ENCODE measurements at regions of chr19 and their contacts with region 1.

Region 1: DNA sequence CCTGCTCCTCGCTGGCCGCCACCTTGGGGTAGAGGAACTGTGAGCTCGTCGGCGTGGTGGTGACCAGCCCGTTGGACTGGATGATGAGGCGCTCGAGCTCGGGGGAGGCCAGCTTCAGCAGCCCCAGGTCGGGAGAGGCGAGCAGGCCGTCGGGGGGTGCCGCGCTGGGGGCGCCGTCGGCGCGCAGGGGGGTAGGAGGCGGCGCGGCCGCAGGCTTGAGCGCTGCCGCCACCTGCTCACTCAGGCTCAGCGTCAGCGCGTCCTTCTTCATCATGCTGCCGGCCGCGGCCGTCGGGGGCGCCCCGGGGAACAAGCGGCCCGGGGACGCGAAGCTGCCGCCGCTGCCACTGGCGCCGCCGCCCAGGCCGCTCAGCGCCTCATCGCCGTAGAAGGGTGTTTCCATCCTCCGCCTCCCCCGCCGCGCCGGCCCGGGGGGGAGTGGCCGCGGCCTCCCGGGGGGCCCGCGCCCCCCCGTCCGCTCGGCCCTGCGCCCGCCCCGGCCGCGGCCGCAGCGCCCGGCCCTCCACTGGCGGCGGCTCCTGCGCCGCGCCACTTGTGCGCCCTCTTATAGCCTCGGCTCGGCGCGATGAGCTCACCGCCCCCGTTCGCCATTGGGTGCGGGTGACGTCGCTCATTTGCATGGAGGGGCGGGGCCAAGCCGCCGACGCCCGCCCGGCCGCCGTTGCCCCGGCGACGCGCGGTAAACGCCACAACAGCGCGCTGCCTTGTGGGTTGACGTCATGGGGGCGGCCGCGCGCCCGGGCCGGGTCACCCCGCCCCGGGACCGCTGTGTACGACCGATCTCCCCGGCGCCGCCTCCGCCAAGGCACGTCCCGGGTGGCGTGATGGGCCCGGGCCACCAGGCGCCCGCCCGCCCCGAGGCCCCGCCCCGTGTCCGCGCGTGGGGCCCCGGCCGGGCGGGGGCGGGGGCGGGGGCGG is at the start of gene JUND:
- DNase-seq: peak; percentile 98
- ATAC-seq: peak; percentile 69
- H3K4me3 Mint-ChIP-seq: peak within 1 kb of the TSS; percentile 92
- H3K27ac Mint-ChIP-seq: peak within 1 kb of the TSS; percentile 100
- H3K4me1 Mint-ChIP-seq: peaks cover 37% of the 10 kb centered on the region
- H3K27me3 Mint-ChIP-seq: no peaks in the 10 kb centered on the region
- CTCF ChIP-seq: no peak
- total RNA-seq, gene JUND: 527 to 530 TPM

Region 2: GRCh38 chr19:18173572-18174288 is 107.6 kb before region 1 on chr19 and contains the start of gene IFI30:
- CTCF ChIA-PET with region 1: no interaction called
- POLR2A ChIA-PET with region 1: no interaction called
- intact Hi-C with region 1: no loop called
- DNase-seq: peak; percentile 72
- ATAC-seq: peak; percentile 86
- H3K4me3 Mint-ChIP-seq: peak within 1 kb of the TSS; percentile 80
- H3K27ac Mint-ChIP-seq: peak within 1 kb of the TSS; percentile 57
- H3K4me1 Mint-ChIP-seq: peaks cover 7% of the 10 kb centered on the region
- H3K27me3 Mint-ChIP-seq: no peaks in the 10 kb centered on the region
- CTCF ChIP-seq: no peak
- total RNA-seq, gene IFI30: 21.9 to 22.9 TPM

Region 3: DNA sequence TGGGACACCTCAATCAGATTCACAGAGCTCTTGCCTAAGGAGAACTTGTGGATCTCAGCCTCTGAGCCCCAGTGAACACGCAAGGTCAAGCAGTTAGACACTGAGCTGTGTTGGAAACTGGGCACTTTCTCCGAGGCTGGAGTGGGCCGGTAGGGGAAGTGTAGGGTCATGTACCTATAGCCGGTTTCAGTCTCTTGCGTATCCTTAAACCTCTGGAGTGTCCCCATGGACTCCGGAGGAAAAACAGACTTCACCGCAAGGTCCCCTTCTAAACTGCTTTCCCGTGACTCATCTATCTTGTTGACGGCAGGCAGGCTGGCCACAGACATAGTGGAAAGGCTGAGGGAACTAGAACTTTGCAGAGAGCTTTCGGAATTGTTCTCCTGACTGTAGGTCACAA is 18.4 kb before region 1 on chr19:
- CTCF ChIA-PET with region 1: interaction called, 12 read pairs
- POLR2A ChIA-PET with region 1: interaction called, 4 read pairs
- intact Hi-C with region 1: no loop called
- DNase-seq: no peak
- ATAC-seq: no peak
- H3K4me3 Mint-ChIP-seq: no peak overlapping the region
- H3K27ac Mint-ChIP-seq: no peak overlapping the region
- H3K4me1 Mint-ChIP-seq: no peaks in the 10 kb centered on the region
- H3K27me3 Mint-ChIP-seq: no peaks in the 10 kb centered on the region
- CTCF ChIP-seq: no peak

Region 4: GRCh38 chr19:18297308-18297707 is 16.0 kb after region 1 on chr19:
- CTCF ChIA-PET with region 1: interaction called, 166 read pairs
- POLR2A ChIA-PET with region 1: interaction called, 592 read pairs
- intact Hi-C with region 1: no loop called
- DNase-seq: no peak
- ATAC-seq: no peak
- H3K4me3 Mint-ChIP-seq: no peak overlapping the region
- H3K27ac Mint-ChIP-seq: peak overlapping the region; percentile 70
- H3K4me1 Mint-ChIP-seq: peaks cover 60% of the 10 kb centered on the region
- H3K27me3 Mint-ChIP-seq: no peaks in the 10 kb centered on the region
- CTCF ChIP-seq: no peak

Region 5: DNA sequence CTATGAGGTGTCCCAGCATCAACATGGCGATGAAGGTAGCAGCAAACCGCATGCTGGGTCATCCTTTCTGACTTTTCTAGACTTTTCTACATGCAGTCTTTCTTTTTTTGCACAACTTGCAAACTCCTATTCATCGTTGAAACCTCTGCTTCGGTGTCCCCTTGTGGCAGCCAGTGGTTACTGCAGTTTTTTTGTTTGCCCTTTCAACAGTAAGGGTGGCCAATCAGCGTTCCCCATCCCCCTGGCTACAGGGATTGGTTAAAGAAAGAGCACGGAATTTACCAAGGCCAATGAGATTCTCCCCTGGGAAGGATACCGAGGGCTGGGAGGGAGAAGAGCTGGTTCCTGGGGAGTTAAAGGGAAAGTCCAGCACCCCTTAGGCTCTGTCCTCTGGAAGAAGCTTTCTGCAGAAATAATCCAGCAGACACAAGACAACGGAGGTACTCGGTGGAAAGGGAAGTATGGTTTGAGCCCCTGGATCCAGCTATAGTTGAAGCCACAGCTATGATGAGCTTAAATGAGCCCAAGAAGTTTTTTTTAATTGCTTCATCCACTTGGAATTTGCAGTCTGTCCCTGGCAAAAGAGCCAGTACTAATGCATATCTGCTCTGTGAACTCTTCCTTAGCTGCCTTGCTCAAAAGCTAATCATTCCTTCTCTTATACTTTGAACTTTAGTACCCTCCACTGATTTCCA is 47.1 kb after region 1 on chr19:
- CTCF ChIA-PET with region 1: interaction called, 235 read pairs
- POLR2A ChIA-PET with region 1: interaction called, 94 read pairs
- intact Hi-C with region 1: loop called (anchors 1 kb)
- DNase-seq: peak; percentile 95
- ATAC-seq: peak; percentile 98
- H3K4me3 Mint-ChIP-seq: peak overlapping the region; percentile 74
- H3K27ac Mint-ChIP-seq: peak overlapping the region; percentile 72
- H3K4me1 Mint-ChIP-seq: peaks cover 19% of the 10 kb centered on the region
- H3K27me3 Mint-ChIP-seq: no peaks in the 10 kb centered on the region
- CTCF ChIP-seq: peak; percentile 90

Region 6: DNA sequence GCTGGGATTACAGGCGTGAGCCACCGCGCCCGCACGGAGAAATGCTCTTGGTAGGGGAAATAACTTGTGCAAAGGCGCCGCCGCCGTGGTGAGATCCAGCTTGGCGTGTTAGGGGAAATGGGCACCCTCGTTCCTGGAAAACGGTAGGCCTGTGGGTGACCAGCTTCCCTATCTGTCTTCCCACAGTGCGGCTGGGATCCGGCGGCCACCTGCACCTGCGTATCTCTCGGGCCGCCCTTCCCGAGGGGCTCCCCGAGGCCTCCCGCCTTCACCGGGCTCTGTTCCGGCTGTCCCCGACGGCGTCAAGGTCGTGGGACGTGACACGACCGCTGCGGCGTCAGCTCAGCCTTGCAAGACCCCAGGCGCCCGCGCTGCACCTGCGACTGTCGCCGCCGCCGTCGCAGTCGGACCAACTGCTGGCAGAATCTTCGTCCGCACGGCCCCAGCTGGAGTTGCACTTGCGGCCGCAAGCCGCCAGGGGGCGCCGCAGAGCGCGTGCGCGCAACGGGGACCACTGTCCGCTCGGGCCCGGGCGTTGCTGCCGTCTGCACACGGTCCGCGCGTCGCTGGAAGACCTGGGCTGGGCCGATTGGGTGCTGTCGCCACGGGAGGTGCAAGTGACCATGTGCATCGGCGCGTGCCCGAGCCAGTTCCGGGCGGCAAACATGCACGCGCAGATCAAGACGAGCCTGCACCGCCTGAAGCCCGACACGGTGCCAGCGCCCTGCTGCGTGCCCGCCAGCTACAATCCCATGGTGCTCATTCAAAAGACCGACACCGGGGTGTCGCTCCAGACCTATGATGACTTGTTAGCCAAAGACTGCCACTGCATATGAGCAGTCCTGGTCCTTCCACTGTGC is 107.0 kb after region 1 on chr19:
- CTCF ChIA-PET with region 1: interaction called, 31 read pairs
- POLR2A ChIA-PET with region 1: interaction called, 6 read pairs
- intact Hi-C with region 1: no loop called
- DNase-seq: peak; percentile 83
- ATAC-seq: peak; percentile 90
- H3K4me3 Mint-ChIP-seq: peak overlapping the region; percentile 62
- H3K27ac Mint-ChIP-seq: no peak overlapping the region
- H3K4me1 Mint-ChIP-seq: peaks cover 6% of the 10 kb centered on the region
- H3K27me3 Mint-ChIP-seq: peaks cover 36% of the 10 kb centered on the region
- CTCF ChIP-seq: peak; percentile 100

Measured in activated CD8-positive, alpha-beta T cell treated with anti-CD3 and anti-CD28 coated beads for 36 hours (primary cell).